Pancreas (tissue), 10 donors: ENCODE measurements at regions of chrX and their contacts with region 1.

Region 1: GRCh38 chrX:140664939-140665338 is 44.6 kb upstream of the LINC00632 start:
- DNase-seq: no peak
- ATAC-seq: peak; percentile 53 to 86 (median 82)
- H3K4me3 ChIP-seq: no peak overlapping the region
- H3K27ac ChIP-seq: no peak overlapping the region
- H3K4me1 ChIP-seq: no peaks in the 10 kb centered on the region
- H3K27me3 ChIP-seq: peaks cover 0 to 6% (median 2%) of the 10 kb centered on the region in 4 donors
- CTCF ChIP-seq: peak in 3 of 4 donors; percentile 23 to 33 (median 30)

Region 2: DNA sequence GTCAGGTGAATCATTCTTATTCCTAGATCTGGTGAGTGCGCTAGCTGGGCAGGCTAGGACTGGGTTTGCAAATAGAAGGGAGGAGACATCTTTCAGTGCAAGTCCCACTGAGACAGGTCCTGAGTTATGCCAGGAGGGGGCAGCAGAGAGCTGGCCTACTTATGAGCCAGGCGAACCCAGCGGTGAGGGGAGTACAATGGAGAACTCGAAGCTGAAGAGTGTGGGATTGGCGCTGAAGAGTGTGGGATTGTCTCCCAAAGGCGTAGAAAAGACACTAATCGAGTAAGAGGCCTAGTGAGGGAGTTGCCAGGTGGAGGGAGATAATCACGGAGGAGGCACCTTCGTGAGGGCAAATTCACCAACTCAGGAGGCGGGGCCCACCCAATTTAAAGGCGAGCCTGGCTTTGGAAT is 607.9 kb before region 1 on chrX:
- intact Hi-C with region 1: loop called in 2 of 3 experiments (anchors 10 kb)
- DNase-seq: peak; percentile 42 to 89 (median 76)
- ATAC-seq: peak; percentile 84 to 99 (median 96)
- H3K4me3 ChIP-seq: no peak overlapping the region
- H3K27ac ChIP-seq: no peak overlapping the region
- H3K4me1 ChIP-seq: no peaks in the 10 kb centered on the region
- H3K27me3 ChIP-seq: peaks cover 0 to 15% (median 0%) of the 10 kb centered on the region in 4 donors
- CTCF ChIP-seq: peak; percentile 80 to 94 (median 88)